Esophagus muscularis mucosa (tissue), 4 donors: ENCODE measurements at regions of chr9 and their contacts with region 1.

Region 1: DNA sequence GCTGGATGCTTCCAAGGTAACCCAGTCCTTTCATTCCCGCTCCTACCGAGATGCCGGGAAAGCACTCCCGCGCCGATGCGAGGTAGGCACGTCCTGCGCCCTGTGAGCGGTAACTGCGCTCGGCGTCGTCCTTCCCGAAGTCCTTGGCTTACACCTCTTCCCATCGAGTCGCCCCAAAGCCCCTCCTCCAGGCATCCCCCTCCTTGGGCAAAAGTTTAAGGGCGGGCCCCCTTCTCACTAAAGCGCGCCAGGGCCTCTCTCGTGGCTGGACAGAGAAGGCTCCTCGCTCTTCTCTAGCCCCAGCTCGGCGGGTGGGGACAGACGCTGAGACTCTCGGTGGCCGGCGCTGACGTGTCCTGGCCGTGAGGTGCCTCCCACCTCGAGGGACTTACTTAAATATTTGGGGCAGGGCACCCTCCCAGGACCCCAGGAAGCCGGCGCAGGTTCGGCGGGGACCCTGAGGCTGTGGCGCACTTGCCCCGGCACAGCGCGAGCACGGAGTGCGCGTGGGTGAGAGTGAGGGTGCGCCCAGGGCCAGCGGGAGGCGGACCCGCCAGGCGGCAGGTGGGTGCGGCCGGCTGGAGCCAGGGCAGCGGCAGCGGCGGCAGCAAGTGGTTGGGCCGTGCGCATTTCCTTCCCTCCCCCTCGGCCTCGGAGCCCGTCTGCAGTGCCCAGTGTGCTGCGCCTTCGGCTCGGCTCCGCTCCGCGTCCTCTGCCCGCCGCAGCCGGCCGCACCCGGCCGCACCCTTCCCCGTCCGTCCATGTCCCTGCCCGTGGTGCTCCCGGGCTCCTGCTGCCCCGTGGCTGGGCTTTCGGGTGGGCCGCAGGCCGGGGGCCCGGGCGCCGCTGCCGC is at the start of gene ENTREP1:
- DNase-seq: no peak
- H3K4me3 ChIP-seq: peak within 1 kb of the TSS; percentile 69 to 80 (median 74)
- H3K27ac ChIP-seq: peak within 1 kb of the TSS; percentile 83 to 92 (median 90)
- H3K4me1 ChIP-seq: peaks cover 10 to 49% (median 30%) of the 10 kb centered on the region in 4 donors
- H3K27me3 ChIP-seq: peaks cover 0 to 7% (median 0%) of the 10 kb centered on the region in 4 donors
- CTCF ChIP-seq: peak in 1 of 3 experiments; percentile 29
- EP300 ChIP-seq: peak; percentile 72
- POLR2A ChIP-seq: peak; percentile 26
- total RNA-seq, gene ENTREP1: 16.2 to 30.2 (median 20.4) TPM

Region 2: GRCh38 chr9:69279084-69279729 is 45.6 kb before region 1 on chr9:
- intact Hi-C with region 1: no loop called
- DNase-seq: no peak
- H3K4me3 ChIP-seq: no peak overlapping the region
- H3K27ac ChIP-seq: no peak overlapping the region
- H3K4me1 ChIP-seq: peaks cover 0 to 2% (median under 1%) of the 10 kb centered on the region in 4 donors
- H3K27me3 ChIP-seq: no peaks in the 10 kb centered on the region
- CTCF ChIP-seq: no peak
- EP300 ChIP-seq: no peak
- POLR2A ChIP-seq: no peak

Region 3: DNA sequence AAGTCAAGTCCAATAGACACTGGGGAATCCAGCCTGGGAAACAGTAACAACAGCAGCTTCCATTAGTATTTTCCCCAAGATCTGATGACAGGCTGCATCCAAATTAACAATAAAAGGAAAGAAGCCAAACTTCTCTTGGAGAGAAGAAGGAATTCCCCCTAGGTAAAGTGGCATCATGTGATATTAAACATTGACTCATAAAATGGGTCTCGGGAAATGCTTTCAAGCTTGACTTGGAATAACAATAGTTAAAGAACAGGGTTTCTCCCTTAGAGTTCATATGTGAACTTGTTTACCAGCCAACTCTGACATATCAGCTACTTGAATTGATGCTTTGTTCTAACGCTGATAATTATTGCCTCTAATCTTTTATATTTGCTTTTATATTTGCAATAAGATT is 45.7 kb after region 1 on chr9:
- intact Hi-C with region 1: loop called (anchors 5 kb)
- DNase-seq: no peak
- H3K4me3 ChIP-seq: no peak overlapping the region
- H3K27ac ChIP-seq: peak overlapping the region in 1 of 4 donors; percentile 26
- H3K4me1 ChIP-seq: peaks cover 2 to 23% (median 16%) of the 10 kb centered on the region in 4 donors
- H3K27me3 ChIP-seq: no peaks in the 10 kb centered on the region
- CTCF ChIP-seq: no peak
- EP300 ChIP-seq: no peak
- POLR2A ChIP-seq: no peak

Region 4: DNA sequence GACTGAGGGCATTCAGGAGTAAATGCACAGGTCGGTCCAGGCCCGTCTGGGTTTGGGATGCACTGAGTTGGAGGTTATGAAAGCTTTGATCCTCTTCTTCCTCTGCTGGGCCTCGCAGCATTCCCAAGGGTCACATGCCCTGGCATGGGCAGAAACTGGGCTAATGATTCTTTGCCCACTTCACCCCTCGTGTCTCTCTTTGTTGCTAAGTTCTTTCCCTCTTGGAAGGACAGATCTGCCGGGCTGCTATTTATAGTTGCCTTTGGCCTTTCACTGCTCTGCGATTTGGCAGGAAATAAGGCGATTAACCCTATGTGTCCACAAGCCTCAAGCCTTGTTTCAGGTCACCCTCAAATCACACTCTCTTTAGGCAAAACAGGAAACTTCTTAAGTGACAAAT is 67.2 kb after region 1 on chr9:
- intact Hi-C with region 1: loop called (anchors 5 kb)
- DNase-seq: peak; percentile 81
- H3K4me3 ChIP-seq: no peak overlapping the region
- H3K27ac ChIP-seq: peak overlapping the region; percentile 56 to 74 (median 72)
- H3K4me1 ChIP-seq: peaks cover 28 to 32% (median 29%) of the 10 kb centered on the region in 4 donors
- H3K27me3 ChIP-seq: no peaks in the 10 kb centered on the region
- CTCF ChIP-seq: no peak
- EP300 ChIP-seq: no peak
- POLR2A ChIP-seq: no peak